Panc1 (cell line): ENCODE measurements at regions of chr4 and their contacts with region 1.

Region 1: DNA sequence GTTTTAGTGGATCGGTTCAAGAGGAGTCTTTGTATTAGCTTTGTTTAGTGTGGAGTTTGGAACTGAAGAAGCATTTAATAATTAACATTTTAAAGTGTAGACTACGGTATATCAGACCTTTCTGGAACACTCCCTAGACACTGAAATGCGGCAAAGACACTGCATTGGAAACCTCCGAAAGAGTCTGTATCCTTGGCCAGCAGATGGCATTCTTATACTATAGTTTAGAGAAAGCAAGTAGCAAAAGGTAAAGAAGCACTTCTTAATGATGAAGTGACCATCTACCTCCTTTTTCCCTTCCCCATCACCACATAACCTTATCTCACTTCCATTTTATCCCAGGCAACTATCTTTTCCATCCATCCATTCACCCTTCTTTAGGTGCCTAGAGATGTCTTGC is 7.6 kb downstream of the FABP2 start:
- DNase-seq: no peak
- ATAC-seq: peak; percentile 94
- H3K4me3 ChIP-seq: no peak overlapping the region
- H3K27ac ChIP-seq: no peak overlapping the region
- H3K4me1 ChIP-seq: no peaks in the 10 kb centered on the region
- H3K27me3 ChIP-seq: peaks cover 2% of the 10 kb centered on the region
- CTCF ChIP-seq: peak; percentile 48; the same call in 1 of the 2 replicates

Region 2: DNA sequence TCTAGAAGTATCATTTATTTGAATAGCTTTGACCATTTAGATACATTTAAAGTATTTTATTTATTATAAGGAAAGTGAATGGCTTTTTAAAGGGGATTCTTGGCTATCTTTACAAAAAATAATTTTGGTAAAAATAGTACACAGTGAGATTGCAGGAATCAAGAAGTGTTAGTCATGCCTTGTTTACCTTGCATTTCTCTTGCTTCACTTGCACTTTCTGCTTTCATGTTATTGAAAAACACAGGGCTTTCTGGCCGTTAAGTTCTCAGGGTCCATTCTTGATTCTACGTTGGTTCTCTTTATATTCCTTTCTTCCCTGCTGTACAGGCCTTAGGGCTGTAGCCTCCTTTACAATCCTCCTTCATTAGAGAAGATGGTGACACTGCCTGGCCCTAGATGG is 456.6 kb before region 1 on chr4:
- CTCF ChIA-PET with region 1: no interaction called
- POLR2A ChIA-PET with region 1: no interaction called
- in situ Hi-C with region 1: no loop called
- intact Hi-C with region 1: no loop called
- DNase-seq: no peak
- ATAC-seq: no peak
- H3K4me3 ChIP-seq: no peak overlapping the region
- H3K27ac ChIP-seq: no peak overlapping the region
- H3K4me1 ChIP-seq: no peaks in the 10 kb centered on the region
- H3K27me3 ChIP-seq: no peaks in the 10 kb centered on the region
- CTCF ChIP-seq: no peak

Region 3: GRCh38 chr4:118954246-118954645 is 360.1 kb before region 1 on chr4:
- CTCF ChIA-PET with region 1: no interaction called
- POLR2A ChIA-PET with region 1: no interaction called
- in situ Hi-C with region 1: no loop called
- intact Hi-C with region 1: no loop called
- DNase-seq: no peak
- ATAC-seq: no peak
- H3K4me3 ChIP-seq: no peak overlapping the region
- H3K27ac ChIP-seq: no peak overlapping the region
- H3K4me1 ChIP-seq: no peaks in the 10 kb centered on the region
- H3K27me3 ChIP-seq: no peaks in the 10 kb centered on the region
- CTCF ChIP-seq: peak; percentile 34

Region 4: GRCh38 chr4:119490335-119490734 is 176.0 kb after region 1 on chr4:
- CTCF ChIA-PET with region 1: no interaction called
- POLR2A ChIA-PET with region 1: no interaction called
- in situ Hi-C with region 1: no loop called
- intact Hi-C with region 1: loop called (anchors 2 kb)
- DNase-seq: peak; percentile 2
- ATAC-seq: peak; percentile 83
- H3K4me3 ChIP-seq: no peak overlapping the region
- H3K27ac ChIP-seq: no peak overlapping the region
- H3K4me1 ChIP-seq: no peaks in the 10 kb centered on the region
- H3K27me3 ChIP-seq: no peaks in the 10 kb centered on the region
- CTCF ChIP-seq: peak; percentile 46; the same call in 1 of the 2 replicates